ENCODE measurements at regions of chr1 and their contacts with region 1.

Region 1: DNA sequence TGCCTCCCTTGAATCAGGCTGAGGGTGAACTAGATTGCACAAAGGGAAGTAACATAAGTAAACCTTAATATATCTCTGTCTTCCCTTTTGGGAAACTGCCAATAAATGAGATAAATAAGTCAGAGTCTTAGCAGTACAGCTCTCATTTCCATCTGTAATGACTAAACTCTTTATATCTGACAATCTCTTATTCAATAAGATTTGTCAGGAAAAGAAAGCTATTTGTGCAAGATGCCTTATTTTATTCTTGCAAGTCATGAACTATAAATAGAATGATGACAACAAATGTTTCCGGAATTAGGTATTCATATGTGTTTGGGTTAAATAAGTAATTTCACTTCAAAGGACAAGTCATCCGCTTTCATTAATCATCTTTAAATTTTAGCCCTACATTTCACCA is 229.2 kb downstream of the PTGER3 start:
- DNase-seq: no peak
- ATAC-seq: no peak

Region 2: GRCh38 chr1:71027991-71028390 is 209.6 kb after region 1 on chr1:
- intact Hi-C with region 1: loop called (anchors 10 kb)
- DNase-seq: no peak
- ATAC-seq: no peak

Measured in Right ventricle myocardium inferior (tissue), 1 donor.